H1 (cell line): ENCODE measurements at regions of chr16 and their contacts with region 1.

Region 1: GRCh38 chr16:18969050-18969854 is 14.5 kb upstream of the TMC7 start:
- DNase-seq: peak; percentile 54 to 96
- H3K4me3 ChIP-seq: peak overlapping the region in 1 of 4 experiments; percentile 47; a peak in 2 of 8 replicates
- H3K27ac ChIP-seq: no peak overlapping the region
- H3K4me1 ChIP-seq: peaks cover 0 to 6% (median 0%) of the 10 kb centered on the region in 4 experiments; a peak in 1 of 7 replicates
- H3K27me3 ChIP-seq: no peaks in the 10 kb centered on the region
- CTCF ChIP-seq: peak; percentile 81 to 91 (median 87)
- EP300 ChIP-seq: no peak; a peak in 1 of 3 replicates
- POLR2A ChIP-seq: no peak
- RAD21 ChIP-seq: peak; percentile 87 to 91

Region 2: DNA sequence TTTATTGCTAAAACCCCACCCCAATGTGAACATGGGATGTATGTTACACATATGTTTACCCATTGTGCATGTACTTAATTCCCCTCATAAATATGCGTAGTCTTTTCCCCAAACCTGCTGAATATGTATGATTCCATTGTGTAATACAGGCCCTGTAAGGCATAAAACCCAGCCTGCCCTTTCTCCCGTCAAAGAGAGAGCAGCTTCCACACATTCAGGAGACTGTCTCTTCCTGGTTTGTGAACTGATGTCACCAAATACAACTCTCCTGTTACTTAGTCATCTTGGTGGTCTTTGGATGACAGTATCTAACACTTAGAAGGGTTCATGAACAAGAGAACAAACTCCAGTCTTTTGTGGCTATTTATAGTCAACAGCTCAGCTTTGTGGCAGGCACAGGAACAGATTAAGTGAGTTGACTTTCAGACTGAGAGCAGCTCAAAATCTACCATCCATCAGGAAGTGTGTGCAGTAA is 10.2 kb before region 1 on chr16:
- CTCF ChIA-PET with region 1: interaction called, 11 read pairs
- POLR2A ChIA-PET with region 1: interaction called, 3 read pairs
- DNase-seq: no peak
- H3K4me3 ChIP-seq: no peak overlapping the region
- H3K27ac ChIP-seq: no peak overlapping the region
- H3K4me1 ChIP-seq: no peaks in the 10 kb centered on the region; a peak in 1 of 7 replicates
- H3K27me3 ChIP-seq: 0 out of 7 replicates have a peak, but pooled peaks cover 0 to 3% (median 0%) of the 10 kb centered on the region in 4 experiments
- CTCF ChIP-seq: no peak
- EP300 ChIP-seq: no peak
- POLR2A ChIP-seq: no peak
- RAD21 ChIP-seq: no peak

Region 3: DNA sequence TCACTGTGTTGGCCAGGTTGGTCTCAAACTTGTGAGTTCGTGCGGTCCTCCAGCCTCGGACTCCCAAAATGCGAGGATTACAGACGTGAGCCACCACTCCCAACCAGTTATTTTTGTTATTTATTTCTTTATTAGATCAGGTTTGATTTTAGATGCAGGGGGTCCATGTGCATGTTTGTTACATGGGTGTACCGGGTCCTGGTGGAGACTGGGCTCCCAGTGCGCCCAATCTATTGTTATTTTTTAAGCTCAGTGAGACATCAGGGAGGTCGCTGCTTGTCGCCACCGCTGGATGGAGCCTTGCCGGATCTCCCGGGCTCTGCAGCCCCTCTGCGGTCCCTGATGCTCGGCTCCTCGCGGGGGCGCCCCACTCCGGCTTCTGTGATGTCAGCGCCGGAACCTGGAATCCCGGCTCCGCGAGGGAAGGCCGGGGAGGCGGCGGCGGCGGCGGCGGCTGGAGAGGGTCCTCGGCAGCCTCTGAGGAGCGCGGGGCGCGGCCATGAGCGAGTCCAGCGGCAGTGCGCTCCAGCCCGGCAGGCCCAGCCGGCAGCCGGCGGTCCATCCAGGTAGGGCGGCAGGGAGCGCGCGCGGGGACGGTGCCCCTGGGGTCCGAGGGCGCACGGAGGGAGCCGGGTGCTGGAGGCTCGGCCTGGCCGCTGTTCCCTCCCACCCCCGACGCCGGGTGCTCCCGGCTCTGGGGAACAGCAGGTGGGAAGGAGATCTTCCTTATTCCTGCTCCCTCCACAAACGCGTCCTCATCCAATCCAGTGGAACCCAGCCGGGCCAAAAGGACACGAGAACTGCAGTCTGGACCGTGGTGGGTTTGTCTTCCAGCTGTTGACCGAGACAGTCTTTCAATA is 14.5 kb after region 1 on chr16 and contains the start of gene TMC7:
- CTCF ChIA-PET with region 1: interaction called, 19 read pairs
- POLR2A ChIA-PET with region 1: no interaction called
- DNase-seq: peak; percentile 71 to 93
- H3K4me3 ChIP-seq: peak within 1 kb of the TSS; percentile 71 to 82 (median 76)
- H3K27ac ChIP-seq: no peak within 1 kb of the TSS
- H3K4me1 ChIP-seq: peaks cover 0 to 2% (median 0%) of the 10 kb centered on the region in 4 experiments; a peak in 1 of 7 replicates
- H3K27me3 ChIP-seq: no peaks in the 10 kb centered on the region
- CTCF ChIP-seq: peak; percentile 77 to 99 (median 78)
- EP300 ChIP-seq: peak in 1 of 2 experiments; percentile 43; a peak in 1 of 3 replicates
- POLR2A ChIP-seq: no peak; a peak in 1 of 3 replicates
- RAD21 ChIP-seq: peak; percentile 73 to 84
- total RNA-seq, gene TMC7: 2.6 and 3.4 TPM in 2 replicates